ENCODE measurements at regions of chr4 and their contacts with region 1.

Region 1: DNA sequence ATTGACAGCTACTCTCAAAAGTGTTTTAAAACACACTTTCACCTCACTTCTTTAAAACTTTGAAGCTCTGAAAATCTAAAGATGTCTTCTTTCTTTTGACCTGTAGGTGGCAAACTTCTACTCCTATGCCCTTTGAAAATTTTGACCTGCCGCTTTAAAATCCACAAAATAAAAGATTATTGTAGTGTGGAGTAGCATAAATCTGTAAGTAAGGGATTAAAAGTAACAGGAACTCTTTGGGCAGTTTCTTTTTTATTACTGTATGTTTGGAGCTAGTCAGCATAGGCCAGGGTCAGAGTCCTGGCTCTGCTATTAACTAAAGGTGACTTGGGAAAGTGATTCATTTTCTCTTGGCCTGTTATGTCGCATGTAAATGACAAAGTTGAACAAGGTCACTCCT is 25.5 kb downstream of the BBS12 start:
- DNase-seq: peak; percentile 39
- H3K4me3 ChIP-seq: no peak overlapping the region
- H3K27ac ChIP-seq: peak overlapping the region in 1 of 2 experiments; percentile 55; a peak in 3 of 4 replicates
- H3K4me1 ChIP-seq: peaks cover 2 to 3% of the 10 kb centered on the region in 2 experiments; a peak in 3 of 4 replicates
- H3K27me3 ChIP-seq: no peaks in the 10 kb centered on the region
- CTCF ChIP-seq: peak; percentile 80
- EP300 ChIP-seq: no peak
- RAD21 ChIP-seq: peak; percentile 81

Region 2: DNA sequence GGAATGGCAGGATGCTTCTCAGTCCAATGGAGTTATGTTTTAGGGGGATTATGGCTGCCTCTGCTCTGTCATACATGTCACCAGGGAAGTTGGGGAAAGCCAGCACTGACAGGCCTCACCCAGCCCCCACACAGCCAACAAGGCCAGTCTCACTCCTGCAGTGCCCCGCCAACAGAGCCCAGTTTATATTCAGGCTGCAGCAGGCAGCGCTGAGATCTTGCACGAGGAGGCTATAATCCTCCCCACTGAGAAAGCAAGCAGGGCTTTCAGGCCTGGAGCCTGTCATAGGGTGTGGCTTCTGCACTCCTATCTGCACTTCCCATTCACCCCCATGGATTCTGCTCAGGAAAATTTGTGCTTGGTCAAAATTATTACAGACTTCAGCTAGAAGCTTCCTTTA is 354.2 kb before region 1 on chr4:
- CTCF ChIA-PET with region 1: no interaction called
- POLR2A ChIA-PET with region 1: no interaction called
- DNase-seq: no peak
- H3K4me3 ChIP-seq: no peak overlapping the region
- H3K27ac ChIP-seq: no peak overlapping the region
- H3K4me1 ChIP-seq: no peaks in the 10 kb centered on the region
- H3K27me3 ChIP-seq: peaks cover 7% of the 10 kb centered on the region; the same call in 1 of the 2 replicates
- CTCF ChIP-seq: no peak
- EP300 ChIP-seq: no peak
- RAD21 ChIP-seq: no peak

Region 3: DNA sequence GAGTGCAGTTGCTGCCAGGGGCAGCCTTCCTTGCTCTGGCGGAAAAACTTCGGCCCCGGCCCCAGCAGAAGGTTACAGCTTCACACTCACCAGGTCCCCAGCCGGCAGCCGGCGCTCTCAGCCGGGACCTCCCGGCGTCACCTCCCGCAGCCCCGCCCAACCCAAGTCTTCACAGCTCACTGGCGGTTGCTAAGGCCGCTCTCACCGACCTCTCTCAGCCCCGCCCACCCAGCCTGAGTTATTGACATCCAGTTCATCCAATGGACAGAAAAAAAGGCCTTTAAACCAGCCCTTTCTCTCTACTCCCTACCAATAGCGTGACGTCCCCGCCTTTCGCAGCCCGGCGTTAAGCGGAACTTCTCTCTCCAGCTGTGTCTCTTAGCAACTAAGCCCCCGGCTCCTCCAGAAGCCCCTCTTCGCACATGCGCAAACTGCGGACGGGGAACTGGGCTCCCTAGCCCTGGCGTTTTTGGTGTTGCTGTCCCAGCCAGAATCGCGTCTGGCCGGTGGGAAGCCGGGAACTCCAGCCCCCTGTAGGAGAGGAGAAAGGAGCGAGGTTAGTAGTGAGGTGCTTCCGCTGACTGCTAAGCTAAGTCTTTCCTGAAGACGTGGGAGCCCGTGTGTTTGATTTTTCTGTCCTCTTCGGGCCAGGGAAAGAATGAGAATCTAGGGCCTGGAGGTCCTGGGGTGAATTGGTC is 25.6 kb before region 1 on chr4 and contains the start of gene BBS12:
- CTCF ChIA-PET with region 1: interaction called, 11 read pairs
- POLR2A ChIA-PET with region 1: no interaction called
- DNase-seq: peak; percentile 95
- H3K4me3 ChIP-seq: peak within 1 kb of the TSS; percentile 70 to 88
- H3K27ac ChIP-seq: peak within 1 kb of the TSS; percentile 77 to 94
- H3K4me1 ChIP-seq: peaks cover 0 to 8% of the 10 kb centered on the region in 2 experiments; a peak in 3 of 4 replicates
- H3K27me3 ChIP-seq: no peaks in the 10 kb centered on the region
- CTCF ChIP-seq: peak; percentile 58
- EP300 ChIP-seq: no peak
- RAD21 ChIP-seq: peak; percentile 51
- polyA plus RNA-seq, gene BBS12: 1.5 and 2.1 TPM in 2 replicates

Region 4: DNA sequence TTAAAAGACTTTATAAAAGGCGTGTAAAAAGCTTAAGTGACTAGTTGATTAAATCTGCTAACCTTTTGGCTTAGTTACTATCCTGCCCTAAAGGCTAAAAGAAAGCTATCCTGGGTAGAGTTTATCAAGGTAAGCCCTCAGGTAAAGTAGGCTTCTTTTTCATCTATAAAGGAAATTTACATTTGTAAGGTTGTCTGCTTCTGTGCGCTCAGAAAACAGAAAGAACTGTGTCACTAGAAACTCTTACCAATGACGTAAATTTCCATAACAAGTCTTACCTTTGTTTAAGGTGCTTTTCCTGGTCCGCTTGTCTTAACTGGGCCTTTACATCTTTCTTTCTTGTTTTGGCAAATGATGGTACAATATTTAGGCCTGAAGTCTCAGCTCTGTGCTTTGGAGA is 30.9 kb after region 1 on chr4:
- CTCF ChIA-PET with region 1: interaction called, 10 read pairs
- POLR2A ChIA-PET with region 1: no interaction called
- DNase-seq: no peak
- H3K4me3 ChIP-seq: no peak overlapping the region
- H3K27ac ChIP-seq: no peak overlapping the region
- H3K4me1 ChIP-seq: peaks cover 0 to 10% of the 10 kb centered on the region in 2 experiments; a peak in 2 of 4 replicates
- H3K27me3 ChIP-seq: no peaks in the 10 kb centered on the region
- CTCF ChIP-seq: no peak
- EP300 ChIP-seq: no peak
- RAD21 ChIP-seq: no peak

Region 5: DNA sequence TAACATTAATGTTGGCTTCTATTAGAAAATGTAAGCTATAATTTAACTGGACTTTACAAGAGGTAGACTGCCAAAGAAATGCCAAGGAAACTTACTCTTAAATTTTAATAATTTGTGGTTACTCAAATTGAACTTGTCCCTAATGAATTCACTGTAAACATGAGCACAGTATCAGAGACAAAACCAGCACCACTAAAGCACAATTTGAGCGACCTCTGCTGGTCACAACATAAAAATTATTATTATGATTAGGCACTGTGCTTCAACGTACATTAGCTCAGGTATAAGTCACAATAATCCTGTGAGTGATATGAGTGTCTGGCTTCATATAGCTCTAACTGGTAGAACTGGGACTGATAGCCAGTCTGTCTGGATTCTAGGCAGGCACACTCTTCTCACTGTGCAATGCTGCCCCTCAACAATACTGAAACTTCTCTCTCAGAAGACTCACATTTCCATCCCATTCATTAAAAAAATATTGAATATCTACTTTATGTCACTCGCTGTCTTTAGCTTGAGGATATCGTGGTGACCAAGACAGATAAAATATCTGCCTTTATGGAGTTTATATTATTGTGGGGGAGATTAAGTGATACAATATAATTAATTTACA is 156.4 kb after region 1 on chr4:
- CTCF ChIA-PET with region 1: interaction called, 126 read pairs
- POLR2A ChIA-PET with region 1: no interaction called
- DNase-seq: peak; percentile 35
- H3K4me3 ChIP-seq: no peak overlapping the region
- H3K27ac ChIP-seq: peak overlapping the region in 1 of 2 experiments; percentile 30; a peak in 1 of 4 replicates
- H3K4me1 ChIP-seq: peaks cover 0 to 11% of the 10 kb centered on the region in 2 experiments; a peak in 2 of 4 replicates
- H3K27me3 ChIP-seq: no peaks in the 10 kb centered on the region
- CTCF ChIP-seq: peak; percentile 72
- EP300 ChIP-seq: 0 out of 4 replicates have a peak, but pooled peaks of 1 of the 2 experiments have one; percentile 8
- RAD21 ChIP-seq: peak; percentile 85

Region 6: GRCh38 chr4:122930862-122931261 is 172.8 kb after region 1 on chr4:
- CTCF ChIA-PET with region 1: interaction called, 29 read pairs
- POLR2A ChIA-PET with region 1: no interaction called
- DNase-seq: no peak
- H3K4me3 ChIP-seq: no peak overlapping the region
- H3K27ac ChIP-seq: no peak overlapping the region
- H3K4me1 ChIP-seq: peaks cover 0 to 2% of the 10 kb centered on the region in 2 experiments; a peak in 2 of 4 replicates
- H3K27me3 ChIP-seq: no peaks in the 10 kb centered on the region
- CTCF ChIP-seq: peak; percentile 82
- EP300 ChIP-seq: no peak
- RAD21 ChIP-seq: peak; percentile 54

Region 7: GRCh38 chr4:123007679-123008078 is 249.6 kb after region 1 on chr4:
- CTCF ChIA-PET with region 1: no interaction called
- POLR2A ChIA-PET with region 1: no interaction called
- DNase-seq: no peak
- H3K4me3 ChIP-seq: no peak overlapping the region
- H3K27ac ChIP-seq: no peak overlapping the region
- H3K4me1 ChIP-seq: no peaks in the 10 kb centered on the region
- H3K27me3 ChIP-seq: no peaks in the 10 kb centered on the region
- CTCF ChIP-seq: no peak
- EP300 ChIP-seq: no peak
- RAD21 ChIP-seq: no peak